ENCODE measurements at regions of chrX and their contacts with region 1.

Region 1: DNA sequence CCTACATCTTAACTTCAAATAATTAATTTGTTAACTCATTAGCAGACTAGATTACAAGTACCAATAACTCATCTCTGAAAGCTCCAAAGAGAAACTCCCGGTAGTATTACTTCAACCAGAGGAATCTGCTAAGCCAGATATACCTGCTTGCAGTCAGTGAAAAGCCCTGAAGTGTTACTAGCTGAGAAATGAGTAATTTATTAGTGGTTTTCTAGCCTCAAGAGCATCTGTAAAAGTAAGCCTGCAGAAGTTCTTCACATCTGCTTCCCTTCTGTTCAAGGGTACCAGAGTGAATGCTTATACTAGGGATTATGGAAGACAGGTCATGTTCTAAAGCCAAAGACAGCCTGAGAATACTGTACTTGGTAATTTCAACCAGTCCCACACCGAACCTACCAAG is 34.7 kb downstream of the IRS4 start:
- DNase-seq: no peak
- ATAC-seq: no peak
- H3K4me3 ChIP-seq: no peak overlapping the region
- H3K27ac ChIP-seq: no peak overlapping the region
- H3K4me1 ChIP-seq: no peaks in the 10 kb centered on the region
- H3K27me3 ChIP-seq: peaks cover 0 to 6% (median 0%) of the 10 kb centered on the region in 4 donors
- CTCF ChIP-seq: no peak

Region 2: GRCh38 chrX:108485960-108486359 is 215.7 kb before region 1 on chrX:
- intact Hi-C with region 1: no loop called
- DNase-seq: no peak
- ATAC-seq: no peak
- H3K4me3 ChIP-seq: no peak overlapping the region
- H3K27ac ChIP-seq: no peak overlapping the region
- H3K4me1 ChIP-seq: no peaks in the 10 kb centered on the region
- H3K27me3 ChIP-seq: peaks cover 0 to 3% (median 0%) of the 10 kb centered on the region in 4 donors
- CTCF ChIP-seq: no peak

Region 3: DNA sequence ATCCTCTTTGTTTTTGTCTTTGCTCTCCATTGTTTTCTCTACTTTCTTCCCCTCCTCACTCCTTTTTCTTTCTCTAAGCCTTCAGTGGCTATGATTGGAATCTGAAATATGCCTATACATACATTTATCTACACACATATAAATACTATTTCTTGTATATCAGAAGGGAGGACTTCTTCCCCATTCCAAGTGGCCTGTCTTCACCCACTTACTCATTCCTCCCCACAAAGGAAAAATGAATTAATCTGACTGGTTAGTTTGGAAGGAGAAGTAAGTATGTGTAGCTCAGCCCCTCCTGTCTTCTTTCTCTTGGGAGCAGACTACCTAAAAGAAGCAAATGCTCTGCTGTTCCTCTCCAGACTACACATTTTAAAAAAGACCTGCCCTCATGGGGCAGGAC is 762.6 kb after region 1 on chrX:
- intact Hi-C with region 1: loop called in 1 of 3 experiments (anchors 10 kb)
- DNase-seq: no peak
- ATAC-seq: no peak
- H3K4me3 ChIP-seq: no peak overlapping the region
- H3K27ac ChIP-seq: no peak overlapping the region
- H3K4me1 ChIP-seq: no peaks in the 10 kb centered on the region
- H3K27me3 ChIP-seq: peaks cover 0 to 6% (median 1%) of the 10 kb centered on the region in 4 donors
- CTCF ChIP-seq: no peak

Region 4: DNA sequence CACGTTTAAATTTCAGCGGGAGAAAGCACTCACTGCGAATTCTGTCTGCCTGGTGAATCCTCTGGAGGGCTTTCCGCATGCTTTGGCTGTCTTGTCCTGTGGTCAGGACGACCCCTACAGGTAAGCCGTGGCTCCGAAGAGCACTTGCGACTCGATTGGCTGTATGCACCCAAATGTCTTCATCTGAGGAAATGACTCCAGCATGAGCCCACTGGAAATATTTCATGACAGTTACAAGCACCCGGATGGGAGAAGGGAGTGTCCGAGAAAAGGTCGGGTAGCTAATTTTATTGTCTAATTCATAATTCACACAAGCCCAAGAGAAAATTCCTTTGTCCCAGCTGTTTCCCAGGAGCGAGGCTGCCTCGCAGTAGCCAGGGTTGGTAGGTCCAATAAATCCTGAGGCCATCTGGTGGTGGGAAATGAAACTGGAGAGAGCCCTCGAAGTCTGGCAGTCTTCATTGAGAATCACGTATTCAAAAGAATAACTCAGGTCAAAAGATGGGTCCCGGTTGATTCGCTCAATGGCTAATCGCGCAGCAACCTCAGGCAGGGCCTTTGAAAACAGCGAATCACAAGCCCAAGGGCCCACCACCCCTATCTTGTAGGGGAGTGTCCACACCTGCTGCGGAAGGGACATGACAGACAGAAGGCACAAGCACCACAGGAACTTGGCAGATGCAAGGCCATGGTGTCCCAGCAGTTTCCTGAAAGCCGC is 773.7 kb after region 1 on chrX:
- intact Hi-C with region 1: loop called in 1 of 3 experiments (anchors 10 kb)
- DNase-seq: peak; percentile 11 to 59 (median 36)
- ATAC-seq: peak; percentile 93 to 98 (median 95)
- H3K4me3 ChIP-seq: peak overlapping the region in 1 of 4 donors; percentile 11
- H3K27ac ChIP-seq: no peak overlapping the region
- H3K4me1 ChIP-seq: no peaks in the 10 kb centered on the region
- H3K27me3 ChIP-seq: peaks cover 0 to 22% (median 0%) of the 10 kb centered on the region in 4 donors
- CTCF ChIP-seq: peak; percentile 27 to 57 (median 54)